Endothelial cell of umbilical vein (primary cell): ENCODE measurements at regions of chr11 and their contacts with region 1.

Region 1: GRCh38 chr11:38005597-38005996 is 1407.6 kb upstream of the RAG2 start:
- DNase-seq: peak; percentile 70
- H3K4me3 ChIP-seq: no peak overlapping the region
- H3K27ac ChIP-seq: peak overlapping the region; percentile 54
- H3K4me1 ChIP-seq: peaks cover 26% of the 10 kb centered on the region
- H3K27me3 ChIP-seq: no peaks in the 10 kb centered on the region
- CTCF ChIP-seq: no peak
- POLR2A ChIP-seq: no peak

Region 2: GRCh38 chr11:37712251-37712650 is 293.3 kb before region 1 on chr11:
- CTCF ChIA-PET with region 1: no interaction called
- POLR2A ChIA-PET with region 1: no interaction called
- dilution Hi-C with region 1: no loop called
- intact Hi-C with region 1: no loop called
- DNase-seq: no peak
- H3K4me3 ChIP-seq: no peak overlapping the region
- H3K27ac ChIP-seq: no peak overlapping the region
- H3K4me1 ChIP-seq: no peaks in the 10 kb centered on the region
- H3K27me3 ChIP-seq: no peaks in the 10 kb centered on the region
- CTCF ChIP-seq: no peak
- POLR2A ChIP-seq: no peak

Region 3: DNA sequence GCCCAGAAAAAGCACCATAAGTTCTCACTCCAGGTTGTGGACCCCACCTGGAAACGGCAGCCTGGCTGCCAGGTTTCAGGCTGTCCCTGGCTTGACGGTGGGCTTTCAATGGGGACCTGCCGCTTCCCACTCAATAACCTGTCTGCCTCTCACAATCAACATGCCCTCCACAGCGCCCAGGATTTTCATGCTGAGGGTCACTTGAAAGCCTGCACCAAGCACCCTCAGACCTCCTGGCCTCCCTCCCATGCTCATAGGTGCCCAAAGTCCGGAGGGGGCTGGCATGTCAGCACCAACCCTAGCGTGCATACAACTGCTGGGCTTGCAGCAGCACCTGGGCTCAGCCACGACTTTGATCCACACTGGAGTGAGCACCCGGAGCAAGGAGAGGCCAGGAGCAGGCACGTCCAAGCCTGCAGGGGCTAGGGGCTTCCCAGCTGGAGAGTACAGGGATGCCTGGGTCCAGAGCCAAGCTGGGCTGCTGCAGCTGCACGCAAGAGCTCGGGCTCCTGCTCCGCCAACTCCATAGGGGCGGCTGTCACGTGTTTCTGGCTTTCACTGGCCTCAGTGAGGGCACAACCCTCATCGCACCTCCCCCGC is 193.2 kb before region 1 on chr11:
- CTCF ChIA-PET with region 1: no interaction called
- POLR2A ChIA-PET with region 1: no interaction called
- dilution Hi-C with region 1: no loop called
- intact Hi-C with region 1: no loop called
- DNase-seq: no peak
- H3K4me3 ChIP-seq: no peak overlapping the region
- H3K27ac ChIP-seq: no peak overlapping the region
- H3K4me1 ChIP-seq: no peaks in the 10 kb centered on the region
- H3K27me3 ChIP-seq: no peaks in the 10 kb centered on the region
- CTCF ChIP-seq: no peak
- POLR2A ChIP-seq: no peak

Region 4: DNA sequence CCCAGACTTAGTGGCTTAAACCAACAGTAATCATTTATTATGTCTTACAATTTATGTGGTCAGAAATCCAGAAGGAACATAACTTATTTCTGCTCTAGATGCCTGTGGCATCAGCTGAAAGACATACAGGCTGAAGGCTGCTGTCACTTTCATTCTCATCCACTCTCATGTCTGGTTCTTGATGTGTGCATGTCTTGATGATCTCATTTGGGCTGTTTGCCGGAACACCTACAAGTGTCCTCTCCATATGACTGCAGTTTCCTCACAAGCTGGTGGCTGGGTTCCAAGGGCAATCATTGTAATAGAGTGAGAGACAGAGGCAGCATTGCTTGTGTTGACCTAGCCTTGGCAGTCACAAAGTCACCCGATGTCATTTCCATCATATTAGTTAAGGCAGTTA is 31.7 kb before region 1 on chr11:
- CTCF ChIA-PET with region 1: no interaction called
- POLR2A ChIA-PET with region 1: no interaction called
- dilution Hi-C with region 1: no loop called
- intact Hi-C with region 1: loop called (anchors 2 kb)
- DNase-seq: peak; percentile 29
- H3K4me3 ChIP-seq: no peak overlapping the region
- H3K27ac ChIP-seq: no peak overlapping the region
- H3K4me1 ChIP-seq: peaks cover 21% of the 10 kb centered on the region
- H3K27me3 ChIP-seq: no peaks in the 10 kb centered on the region
- CTCF ChIP-seq: no peak
- POLR2A ChIP-seq: no peak

Region 5: DNA sequence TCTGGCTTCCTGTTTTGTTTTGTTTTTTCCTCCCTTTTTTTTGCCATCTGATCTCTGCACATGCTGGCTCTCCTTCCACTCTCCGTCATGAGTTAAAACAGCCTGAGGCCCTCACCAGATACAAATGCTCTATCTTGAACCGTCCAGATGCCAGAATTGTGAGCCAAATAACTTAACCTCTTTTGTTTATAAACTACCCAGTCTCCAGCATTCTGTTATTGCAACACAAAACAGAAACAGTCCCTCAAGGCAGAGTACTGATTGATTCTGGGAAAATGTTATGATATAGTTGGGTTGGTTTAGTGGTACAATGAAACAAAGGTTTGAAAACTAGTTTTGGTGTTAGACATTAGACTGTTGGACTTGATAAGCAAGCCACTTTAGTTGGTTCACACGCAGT is 17.6 kb before region 1 on chr11:
- CTCF ChIA-PET with region 1: interaction called, 5 read pairs
- POLR2A ChIA-PET with region 1: no interaction called
- dilution Hi-C with region 1: no loop called
- intact Hi-C with region 1: loop called (anchors 1 kb)
- DNase-seq: peak; percentile 66
- H3K4me3 ChIP-seq: no peak overlapping the region
- H3K27ac ChIP-seq: no peak overlapping the region
- H3K4me1 ChIP-seq: peaks cover 25% of the 10 kb centered on the region
- H3K27me3 ChIP-seq: no peaks in the 10 kb centered on the region
- CTCF ChIP-seq: no peak
- POLR2A ChIP-seq: no peak